PC-3 (cell line): ENCODE measurements at regions of chr17 and their contacts with region 1.

Region 1: GRCh38 chr17:48074315-48075081 is 26.3 kb downstream of the NFE2L1 start:
- DNase-seq: peak; percentile 95
- ATAC-seq: peak; percentile 91
- H3K4me3 ChIP-seq: no peak overlapping the region
- H3K27ac ChIP-seq: no peak overlapping the region
- H3K4me1 ChIP-seq: no peaks in the 10 kb centered on the region
- H3K27me3 ChIP-seq: no peaks in the 10 kb centered on the region
- CTCF ChIP-seq: peak; percentile 92

Region 2: GRCh38 chr17:48031966-48032365 is 42.5 kb before region 1 on chr17:
- CTCF ChIA-PET with region 1: interaction called, 10 read pairs
- POLR2A ChIA-PET with region 1: interaction called, 6 read pairs
- intact Hi-C with region 1: no loop called
- DNase-seq: no peak
- ATAC-seq: no peak
- H3K4me3 ChIP-seq: no peak overlapping the region
- H3K27ac ChIP-seq: no peak overlapping the region
- H3K4me1 ChIP-seq: peaks cover 1% of the 10 kb centered on the region
- H3K27me3 ChIP-seq: no peaks in the 10 kb centered on the region
- CTCF ChIP-seq: no peak

Region 3: DNA sequence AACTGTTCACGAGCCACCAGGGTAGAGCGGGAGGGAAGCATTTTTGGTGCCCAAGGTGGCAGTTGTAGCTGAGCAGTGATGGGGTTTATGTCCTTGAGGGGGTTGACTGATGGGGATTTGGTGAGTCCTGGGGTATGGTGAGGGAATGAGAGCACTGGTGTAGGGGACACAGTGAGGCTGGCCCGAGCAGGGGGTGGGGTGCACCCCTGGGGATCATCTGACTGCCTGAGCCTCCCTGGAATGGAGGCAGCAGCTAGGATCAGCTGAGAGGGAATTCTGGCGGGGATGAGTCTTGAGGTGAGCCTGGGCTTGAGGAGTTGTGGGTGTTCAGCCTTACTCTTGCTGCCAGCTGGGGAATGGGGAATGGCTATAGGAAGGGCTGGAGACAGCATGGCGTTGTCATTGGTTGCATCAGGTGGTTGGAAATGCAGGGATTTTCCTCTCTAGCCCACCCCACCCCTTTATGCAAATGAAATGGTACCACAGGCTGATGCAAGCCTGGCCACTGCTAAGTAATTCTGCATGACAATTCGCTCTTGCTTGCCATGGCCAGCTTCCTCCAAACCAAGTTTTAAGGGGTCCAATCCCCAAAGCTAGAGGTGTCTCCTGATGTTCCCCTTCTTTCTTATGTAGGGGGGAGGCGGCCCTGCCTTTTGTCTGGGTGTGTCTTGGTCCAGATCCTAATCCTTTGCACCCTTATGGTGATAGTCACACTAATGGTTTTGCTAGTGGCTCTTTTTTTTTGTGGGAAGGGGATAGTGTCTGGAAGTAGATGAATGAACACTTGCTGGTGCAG is 18.9 kb before region 1 on chr17:
- CTCF ChIA-PET with region 1: no interaction called
- POLR2A ChIA-PET with region 1: no interaction called
- intact Hi-C with region 1: no loop called
- DNase-seq: no peak
- ATAC-seq: peak; percentile 63; the same call in 1 of the 2 replicates
- H3K4me3 ChIP-seq: no peak overlapping the region
- H3K27ac ChIP-seq: no peak overlapping the region
- H3K4me1 ChIP-seq: peaks cover 29% of the 10 kb centered on the region
- H3K27me3 ChIP-seq: no peaks in the 10 kb centered on the region
- CTCF ChIP-seq: no peak